Right ventricle myocardium superior (tissue), 1 donor: ENCODE measurements at regions of chr18 and their contacts with region 1.

Region 1: DNA sequence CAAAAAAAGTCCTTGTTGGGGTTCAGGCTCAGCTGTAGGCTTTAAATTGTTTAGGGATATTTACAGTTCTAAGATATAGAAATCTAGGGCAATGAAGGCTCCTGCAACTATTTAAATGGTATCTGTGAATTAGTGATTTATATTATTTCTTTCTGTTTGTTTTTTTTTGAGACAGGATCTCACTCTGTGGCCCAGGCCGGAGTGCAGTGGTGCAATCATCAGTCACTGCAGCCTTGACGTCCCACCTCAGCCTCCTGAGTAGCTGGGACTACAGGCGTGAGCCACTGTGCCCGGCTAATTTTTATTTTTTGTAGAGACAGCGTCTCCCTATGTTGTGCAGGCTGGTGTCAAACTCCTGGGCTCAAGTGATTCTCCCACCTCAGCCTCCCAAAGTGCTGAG is 32.3 kb upstream of the NDUFV2 start:
- DNase-seq: no peak
- ATAC-seq: no peak

Region 2: GRCh38 chr18:8858888-8859511 is 211.2 kb before region 1 on chr18:
- intact Hi-C with region 1: no loop called
- DNase-seq: no peak
- ATAC-seq: peak; percentile 61

Region 3: GRCh38 chr18:9147440-9148202 is 77.4 kb after region 1 on chr18:
- intact Hi-C with region 1: loop called (anchors 5 kb)
- DNase-seq: no peak
- ATAC-seq: peak; percentile 89